Activated T-helper 1 cell treated with anti-CD3 and anti-CD28 coated beads, Interleukin-12 subunit alpha, Interleukin-12 subunit beta, Interleukin-2, Interleukin-4 antibody, amounts not matched to agents 30 ng/mL and 10 ng/mL and 1 ng/mL, durations not matched to agents 14 hours and 24 hours and 36 hours (primary cell): ENCODE measurements at regions of chr6 and their contacts with region 1.

Region 1: DNA sequence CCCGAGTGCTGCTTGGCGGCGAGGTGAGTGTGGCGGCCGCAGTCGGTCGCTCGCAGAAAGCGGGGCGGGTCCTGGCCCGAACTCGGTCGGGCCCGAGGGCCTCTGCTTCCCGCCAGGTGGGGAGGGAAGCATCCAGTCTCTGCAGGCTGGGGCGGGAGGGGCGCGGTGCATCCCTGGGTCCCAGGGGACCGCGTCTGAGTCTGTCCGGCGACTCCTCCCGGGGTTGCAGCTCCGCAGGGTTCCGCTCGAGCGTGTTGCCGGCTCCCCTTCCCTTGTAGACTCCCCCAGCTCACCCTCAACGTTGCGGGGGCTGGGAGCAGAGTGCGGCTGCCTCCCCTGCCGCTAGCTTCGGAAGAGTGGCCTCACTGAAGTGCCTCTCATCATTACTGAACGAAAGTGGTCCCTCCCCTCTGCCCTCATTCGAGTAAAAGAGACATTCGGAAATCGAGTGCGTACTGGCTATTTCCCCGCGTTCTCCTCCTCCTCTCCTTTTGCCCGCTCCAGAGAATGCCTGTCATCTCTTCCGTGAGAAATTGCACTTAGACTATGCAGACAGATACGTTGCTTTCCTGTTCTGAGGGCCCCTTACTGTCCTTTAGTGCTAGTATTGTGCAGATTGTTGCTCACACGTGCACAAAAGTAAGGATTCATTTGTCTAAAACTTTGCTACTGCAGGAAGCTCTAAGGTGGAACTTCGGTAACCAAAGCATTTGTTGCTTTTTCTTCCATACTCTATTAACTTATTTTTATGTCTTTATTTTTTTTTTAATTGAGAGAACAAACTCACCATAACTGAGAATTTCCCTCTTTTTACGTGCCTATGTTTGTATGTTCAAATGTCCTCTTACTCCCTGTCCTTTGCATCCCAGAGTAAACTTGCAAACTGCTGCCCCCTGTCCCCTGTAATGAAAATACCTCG is 751 bp downstream of the MAP3K4 start:
- DNase-seq: no peak
- H3K4me3 Mint-ChIP-seq: peak overlapping the region; percentile 95
- H3K27ac Mint-ChIP-seq: peak overlapping the region; percentile 91
- H3K4me1 Mint-ChIP-seq: peaks cover 21% of the 10 kb centered on the region
- H3K27me3 Mint-ChIP-seq: peaks cover 17% of the 10 kb centered on the region

Region 2: GRCh38 chr6:160930547-160931377 is 61.6 kb before region 1 on chr6:
- intact Hi-C with region 1: loop called (anchors 2 kb)
- DNase-seq: peak; percentile 31
- H3K4me3 Mint-ChIP-seq: no peak overlapping the region
- H3K27ac Mint-ChIP-seq: no peak overlapping the region
- H3K4me1 Mint-ChIP-seq: no peaks in the 10 kb centered on the region
- H3K27me3 Mint-ChIP-seq: peaks cover 18% of the 10 kb centered on the region

Region 3: DNA sequence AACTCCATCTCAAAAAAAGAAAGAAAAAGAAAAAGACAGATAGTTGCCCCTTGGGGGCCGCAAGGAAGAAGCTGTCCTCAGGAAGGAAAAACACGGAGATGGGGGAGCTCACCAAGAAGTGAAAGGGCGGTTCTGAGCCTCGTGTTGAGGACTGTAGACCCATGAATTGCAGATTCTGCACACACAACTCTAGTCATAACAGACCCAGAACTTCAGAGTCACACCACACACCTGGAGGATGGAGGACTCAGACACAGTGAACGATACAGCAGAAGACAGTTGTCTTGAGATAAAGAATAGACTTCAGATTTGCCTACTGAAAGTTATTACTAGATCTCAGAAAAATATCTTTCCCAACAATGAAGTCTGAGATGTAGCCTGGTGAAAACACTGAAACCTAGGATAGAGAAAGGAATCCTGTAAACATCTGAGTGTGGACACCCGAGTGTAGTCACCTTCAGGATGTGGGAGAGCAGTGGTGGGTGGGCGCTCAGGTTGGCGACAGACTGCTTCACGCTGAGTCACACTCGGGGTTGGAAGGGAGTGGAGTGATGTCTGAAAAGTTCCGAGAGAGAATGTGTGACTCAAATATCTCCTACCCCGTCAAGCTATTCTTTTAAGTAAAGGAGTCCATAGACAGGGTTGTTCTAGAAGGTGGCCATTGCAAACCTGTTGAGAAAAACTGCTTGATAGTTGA is 87.4 kb after region 1 on chr6:
- intact Hi-C with region 1: loop called (anchors 5 kb)
- DNase-seq: peak; percentile 22
- H3K4me3 Mint-ChIP-seq: peak overlapping the region; percentile 28
- H3K27ac Mint-ChIP-seq: peak overlapping the region; percentile 73
- H3K4me1 Mint-ChIP-seq: no peaks in the 10 kb centered on the region
- H3K27me3 Mint-ChIP-seq: no peaks in the 10 kb centered on the region

Region 4: GRCh38 chr6:161128680-161129196 is 136.4 kb after region 1 on chr6:
- intact Hi-C with region 1: loop called (anchors 5 kb)
- DNase-seq: peak; percentile 10
- H3K4me3 Mint-ChIP-seq: no peak overlapping the region
- H3K27ac Mint-ChIP-seq: peak overlapping the region; percentile 79
- H3K4me1 Mint-ChIP-seq: peaks cover 27% of the 10 kb centered on the region
- H3K27me3 Mint-ChIP-seq: no peaks in the 10 kb centered on the region

Region 5: GRCh38 chr6:161242779-161243693 is 250.7 kb after region 1 on chr6:
- intact Hi-C with region 1: no loop called
- DNase-seq: no peak
- H3K4me3 Mint-ChIP-seq: no peak overlapping the region
- H3K27ac Mint-ChIP-seq: no peak overlapping the region
- H3K4me1 Mint-ChIP-seq: peaks cover 15% of the 10 kb centered on the region
- H3K27me3 Mint-ChIP-seq: no peaks in the 10 kb centered on the region

Region 6: GRCh38 chr6:161273752-161274487 is 281.6 kb after region 1 on chr6 and contains the start of gene AGPAT4:
- intact Hi-C with region 1: loop called (anchors 1 kb)
- DNase-seq: peak; percentile 73
- H3K4me3 Mint-ChIP-seq: peak within 1 kb of the TSS; percentile 91
- H3K27ac Mint-ChIP-seq: peak within 1 kb of the TSS; percentile 97
- H3K4me1 Mint-ChIP-seq: peaks cover 41% of the 10 kb centered on the region
- H3K27me3 Mint-ChIP-seq: peaks cover 9% of the 10 kb centered on the region
- total RNA-seq, gene AGPAT4: 7.8 and 8.6 TPM in 2 replicates

Region 7: DNA sequence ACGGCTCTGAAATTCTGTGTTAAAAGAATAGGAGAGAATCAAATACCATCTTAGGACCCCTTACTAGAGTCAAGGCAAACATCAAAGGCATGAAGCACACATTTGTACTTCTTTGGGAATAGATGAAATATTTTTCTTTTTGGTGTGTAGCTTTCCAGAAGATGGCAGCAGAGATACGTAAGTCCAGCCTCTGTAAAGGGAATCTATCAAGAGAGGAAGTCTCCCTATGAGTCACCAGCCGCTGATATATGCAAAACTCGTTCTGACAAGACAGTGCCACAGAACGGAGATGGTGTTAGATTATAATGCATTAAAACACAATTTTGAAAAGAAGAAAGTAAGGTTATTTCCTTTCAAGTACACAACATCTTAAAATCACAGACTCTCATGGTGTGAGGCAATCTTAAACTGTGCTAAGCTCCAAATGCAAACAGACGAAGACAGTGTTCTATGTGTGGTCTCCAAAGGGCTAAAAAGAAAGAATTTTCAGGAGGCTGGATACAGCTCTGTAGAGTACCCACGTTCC is 401.6 kb after region 1 on chr6:
- intact Hi-C with region 1: loop called (anchors 5 kb)
- DNase-seq: peak; percentile 57
- H3K4me3 Mint-ChIP-seq: no peak overlapping the region
- H3K27ac Mint-ChIP-seq: no peak overlapping the region
- H3K4me1 Mint-ChIP-seq: no peaks in the 10 kb centered on the region
- H3K27me3 Mint-ChIP-seq: peaks cover 29% of the 10 kb centered on the region